ENCODE measurements at regions of chr3 and their contacts with region 1.

Region 1: GRCh38 chr3:120795017-120795648 is 52.6 kb downstream of the GTF2E1 start:
- DNase-seq: peak; percentile 95
- H3K4me3 Mint-ChIP-seq: no peak overlapping the region
- H3K27ac Mint-ChIP-seq: no peak overlapping the region
- H3K4me1 Mint-ChIP-seq: no peaks in the 10 kb centered on the region
- H3K27me3 Mint-ChIP-seq: peaks cover 3% of the 10 kb centered on the region

Region 2: DNA sequence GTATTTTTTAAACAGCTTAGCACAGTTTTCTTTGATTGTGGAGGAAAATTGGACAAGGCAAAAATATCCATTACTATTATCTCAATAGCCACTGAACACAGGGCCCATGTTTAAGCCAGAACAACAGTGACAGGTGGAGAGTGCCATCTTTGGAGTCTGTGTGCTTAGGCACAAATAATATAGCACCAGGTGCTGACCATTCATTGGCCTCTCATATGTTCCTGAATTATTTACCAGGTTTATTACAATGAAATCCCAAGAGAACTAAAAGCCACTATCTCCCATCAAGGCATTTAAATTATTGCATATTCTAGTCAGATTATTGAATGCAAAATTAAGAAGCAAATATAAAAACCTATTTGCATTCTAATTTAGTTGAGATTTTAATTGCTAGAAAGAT is 549.7 kb before region 1 on chr3:
- intact Hi-C with region 1: loop called (anchors 10 kb)
- DNase-seq: no peak
- H3K4me3 Mint-ChIP-seq: no peak overlapping the region
- H3K27ac Mint-ChIP-seq: no peak overlapping the region
- H3K4me1 Mint-ChIP-seq: no peaks in the 10 kb centered on the region
- H3K27me3 Mint-ChIP-seq: peaks cover 26% of the 10 kb centered on the region

Region 3: GRCh38 chr3:120634539-120634938 is 160.6 kb before region 1 on chr3:
- intact Hi-C with region 1: no loop called
- DNase-seq: no peak
- H3K4me3 Mint-ChIP-seq: no peak overlapping the region
- H3K27ac Mint-ChIP-seq: no peak overlapping the region
- H3K4me1 Mint-ChIP-seq: no peaks in the 10 kb centered on the region
- H3K27me3 Mint-ChIP-seq: no peaks in the 10 kb centered on the region

Region 4: DNA sequence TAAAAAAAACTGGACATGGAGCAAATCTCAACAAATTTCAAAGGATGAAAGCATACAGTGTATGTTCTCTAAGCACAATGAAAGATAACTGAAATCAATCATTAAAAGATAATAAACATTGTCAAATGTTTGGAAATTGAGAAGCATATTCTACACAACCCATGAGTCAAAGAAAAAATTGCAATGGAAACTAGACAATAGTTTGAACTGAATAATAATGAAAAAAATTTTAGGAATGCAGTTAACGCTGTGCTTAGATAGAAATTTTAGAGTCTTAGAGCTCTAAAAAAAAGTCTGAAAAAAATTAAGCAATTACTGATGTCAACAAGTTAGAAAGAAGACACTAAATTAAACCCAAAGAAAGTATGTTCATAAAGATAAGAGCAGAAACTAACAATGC is 68.3 kb before region 1 on chr3:
- intact Hi-C with region 1: no loop called
- DNase-seq: no peak
- H3K4me3 Mint-ChIP-seq: no peak overlapping the region
- H3K27ac Mint-ChIP-seq: no peak overlapping the region
- H3K4me1 Mint-ChIP-seq: peaks cover 2% of the 10 kb centered on the region
- H3K27me3 Mint-ChIP-seq: no peaks in the 10 kb centered on the region

Region 5: GRCh38 chr3:120742198-120742849 is 52.8 kb before region 1 on chr3 and contains the starts of genes GTF2E1 and RABL3:
- intact Hi-C with region 1: loop called (anchors 2 kb)
- DNase-seq: peak; percentile 99
- H3K4me3 Mint-ChIP-seq: peak within 1 kb of the TSS; percentile 97
- H3K27ac Mint-ChIP-seq: peak within 1 kb of the TSS; percentile 98
- H3K4me1 Mint-ChIP-seq: peaks cover 25% of the 10 kb centered on the region
- H3K27me3 Mint-ChIP-seq: peaks cover 2% of the 10 kb centered on the region
- total RNA-seq, gene GTF2E1: 25.9 and 27.8 TPM in 2 replicates
- total RNA-seq, gene RABL3: 27.6 and 29.3 TPM in 2 replicates